ENCODE measurements at regions of chr17 and their contacts with region 1.

Region 1: GRCh38 chr17:12020642-12021622 is at the start of gene MAP2K4:
- DNase-seq: peak; percentile 87 to 99 (median 94)
- ATAC-seq: peak; percentile 100
- H3K4me3 ChIP-seq: peak within 1 kb of the TSS; percentile 57
- H3K4me3 Mint-ChIP-seq: peak within 1 kb of the TSS; percentile 79 to 91 (median 84)
- H3K27ac ChIP-seq: peak within 1 kb of the TSS; percentile 89
- H3K27ac Mint-ChIP-seq: peak within 1 kb of the TSS; percentile 31 to 88 (median 83)
- H3K4me1 ChIP-seq: peaks cover 16 to 17% of the 10 kb centered on the region in 2 donors
- H3K4me1 Mint-ChIP-seq: peaks cover 31 to 56% (median 53%) of the 10 kb centered on the region in 7 donors
- H3K27me3 ChIP-seq: no peaks in the 10 kb centered on the region
- H3K27me3 Mint-ChIP-seq: peaks cover 0 to 14% (median 0%) of the 10 kb centered on the region in 5 donors
- total RNA-seq, gene MAP2K4: 26.3 to 45.1 (median 33.9) TPM

Region 2: DNA sequence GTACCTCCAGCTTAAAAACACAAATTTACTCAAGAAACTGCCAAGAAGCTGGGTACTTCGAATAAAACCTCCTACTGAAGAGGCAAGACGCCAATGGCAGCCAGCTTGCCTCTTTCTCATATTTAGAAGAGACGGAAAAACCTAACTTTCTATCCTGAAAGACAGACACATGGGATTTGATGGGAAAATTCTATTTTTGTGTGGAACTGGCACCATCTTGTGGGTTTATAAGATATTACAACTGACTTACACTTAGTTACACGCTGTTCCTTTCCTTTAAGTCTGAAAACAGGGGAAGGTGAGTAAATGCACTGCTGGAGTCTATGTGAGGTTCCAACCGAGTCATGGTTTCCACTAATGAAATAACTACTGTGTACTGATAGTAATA is 34.0 kb before region 1 on chr17:
- CTCF ChIA-PET with region 1: no interaction called
- POLR2A ChIA-PET with region 1: interaction called, 12 read pairs
- intact Hi-C with region 1: loop called in 1 of 2 experiments (anchors 5 kb)
- DNase-seq: no peak
- ATAC-seq: no peak
- H3K4me3 ChIP-seq: no peak overlapping the region
- H3K4me3 Mint-ChIP-seq: no peak overlapping the region
- H3K27ac ChIP-seq: no peak overlapping the region
- H3K27ac Mint-ChIP-seq: no peak overlapping the region
- H3K4me1 ChIP-seq: no peaks in the 10 kb centered on the region
- H3K4me1 Mint-ChIP-seq: peaks cover 5 to 42% (median 24%) of the 10 kb centered on the region in 7 donors
- H3K27me3 ChIP-seq: no peaks in the 10 kb centered on the region
- H3K27me3 Mint-ChIP-seq: no peaks in the 10 kb centered on the region

Region 3: GRCh38 chr17:12055889-12056288 is 35.0 kb after region 1 on chr17:
- CTCF ChIA-PET with region 1: no interaction called
- POLR2A ChIA-PET with region 1: interaction called, 3 read pairs
- intact Hi-C with region 1: loop called in 1 of 2 experiments (anchors 2 kb)
- DNase-seq: no peak
- ATAC-seq: no peak
- H3K4me3 ChIP-seq: no peak overlapping the region
- H3K4me3 Mint-ChIP-seq: peak overlapping the region in 1 of 10 donors; percentile 49
- H3K27ac ChIP-seq: no peak overlapping the region
- H3K27ac Mint-ChIP-seq: peak overlapping the region in 6 of 9 donors; percentile 3 to 78 (median 41)
- H3K4me1 ChIP-seq: peaks cover 0 to 7% of the 10 kb centered on the region in 2 donors
- H3K4me1 Mint-ChIP-seq: peaks cover 38 to 85% (median 69%) of the 10 kb centered on the region in 7 donors
- H3K27me3 ChIP-seq: no peaks in the 10 kb centered on the region
- H3K27me3 Mint-ChIP-seq: no peaks in the 10 kb centered on the region

Region 4: GRCh38 chr17:13017659-13018459 is 996.9 kb after region 1 on chr17 and contains the start of gene ELAC2:
- CTCF ChIA-PET with region 1: no interaction called
- POLR2A ChIA-PET with region 1: interaction called, 4 read pairs
- intact Hi-C with region 1: loop called in 1 of 2 experiments (anchors 1 kb)
- DNase-seq: peak; percentile 86 to 98 (median 95)
- ATAC-seq: peak; percentile 100
- H3K4me3 ChIP-seq: peak within 1 kb of the TSS; percentile 77
- H3K4me3 Mint-ChIP-seq: peak within 1 kb of the TSS; percentile 90 to 99 (median 96)
- H3K27ac ChIP-seq: peak within 1 kb of the TSS; percentile 78
- H3K27ac Mint-ChIP-seq: peak within 1 kb of the TSS; percentile 85 to 99 (median 97)
- H3K4me1 ChIP-seq: peaks cover 6 to 16% of the 10 kb centered on the region in 2 donors
- H3K4me1 Mint-ChIP-seq: peaks cover 18 to 48% (median 35%) of the 10 kb centered on the region in 7 donors
- H3K27me3 ChIP-seq: no peaks in the 10 kb centered on the region
- H3K27me3 Mint-ChIP-seq: no peaks in the 10 kb centered on the region
- total RNA-seq, gene ELAC2: 65.2 to 78.9 (median 75.3) TPM

Measured in naive thymus-derived CD4-positive, alpha-beta T cell (primary cell).